ENCODE measurements at regions of chr14 and their contacts with region 1.

Region 1: GRCh38 chr14:29558516-29558915 is 369.1 kb downstream of the PRKD1 start:
- ATAC-seq: no peak
- H3K4me3 ChIP-seq: no peak overlapping the region
- H3K27ac ChIP-seq: no peak overlapping the region
- H3K4me1 ChIP-seq: no peaks in the 10 kb centered on the region

Region 2: GRCh38 chr14:29321646-29322045 is 236.9 kb before region 1 on chr14:
- in situ Hi-C with region 1: no loop called
- ATAC-seq: no peak
- H3K4me3 ChIP-seq: no peak overlapping the region
- H3K27ac ChIP-seq: no peak overlapping the region
- H3K4me1 ChIP-seq: no peaks in the 10 kb centered on the region

Region 3: DNA sequence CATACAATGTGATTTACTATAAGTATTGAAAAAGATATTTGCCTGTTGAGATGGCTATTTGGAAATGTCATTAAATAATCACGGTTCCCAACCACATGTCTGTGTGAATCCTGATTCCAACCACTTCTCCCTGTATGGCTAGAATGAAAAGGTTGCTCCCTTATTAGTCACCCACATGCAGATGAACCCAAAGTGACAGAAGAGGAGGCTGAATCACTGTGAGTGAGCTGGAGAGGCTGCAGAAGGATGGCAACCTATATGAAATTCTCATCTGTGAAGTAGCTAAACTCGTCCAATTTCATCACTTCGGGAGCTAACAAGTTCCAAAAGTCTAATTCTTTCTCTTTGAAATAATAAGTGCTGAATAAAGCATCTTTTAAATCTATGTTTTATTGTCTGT is 68.6 kb after region 1 on chr14:
- in situ Hi-C with region 1: no loop called
- ATAC-seq: peak in 7 of 8 experiments; percentile 53 to 97 (median 78)
- H3K4me3 ChIP-seq: no peak overlapping the region
- H3K27ac ChIP-seq: no peak overlapping the region
- H3K4me1 ChIP-seq: no peaks in the 10 kb centered on the region

Region 4: DNA sequence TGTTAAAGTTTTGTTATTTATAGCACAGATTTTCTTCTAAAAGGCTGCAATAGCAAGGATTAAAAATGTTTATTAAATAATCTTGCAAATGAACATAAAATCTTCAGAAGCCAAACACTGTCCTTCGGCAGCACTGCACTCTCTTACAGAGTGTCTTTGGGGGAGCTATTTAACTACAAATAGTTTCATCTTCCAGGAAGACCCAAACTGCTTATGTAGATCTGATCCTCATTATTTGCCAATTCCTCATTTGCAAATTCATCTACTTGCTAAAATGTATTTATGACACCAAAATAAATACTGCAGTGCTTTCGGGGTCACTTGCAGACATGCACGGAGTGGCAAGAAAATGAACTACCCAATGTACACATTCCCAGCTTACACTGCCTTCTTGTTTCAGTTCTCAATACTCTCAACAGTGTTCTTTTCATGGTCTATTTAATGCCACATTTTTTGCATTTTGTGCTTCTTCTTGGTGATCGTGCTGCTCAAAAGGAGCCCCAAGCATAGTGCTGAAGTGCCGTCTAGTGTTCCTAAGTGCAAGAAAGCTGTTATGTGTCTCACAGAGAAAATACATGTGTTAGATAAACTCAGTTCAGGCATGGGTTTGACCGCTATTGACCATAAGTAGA is 241.1 kb after region 1 on chr14:
- in situ Hi-C with region 1: loop called in 1 of 9 experiments (anchors 25 kb)
- ATAC-seq: peak in 4 of 8 experiments; percentile 19 to 75 (median 56)
- H3K4me3 ChIP-seq: no peak overlapping the region
- H3K27ac ChIP-seq: no peak overlapping the region
- H3K4me1 ChIP-seq: peaks cover 0 to 11% of the 10 kb centered on the region in 2 donors

Region 5: GRCh38 chr14:30005114-30005808 is 446.7 kb after region 1 on chr14:
- in situ Hi-C with region 1: loop called in 4 of 9 experiments (anchors 25 kb)
- ATAC-seq: peak in 7 of 8 experiments; percentile 53 to 90 (median 65)
- H3K4me3 ChIP-seq: no peak overlapping the region
- H3K27ac ChIP-seq: no peak overlapping the region
- H3K4me1 ChIP-seq: peaks cover 6 to 12% of the 10 kb centered on the region in 2 donors

Region 6: GRCh38 chr14:30214461-30215090 is 656.1 kb after region 1 on chr14:
- in situ Hi-C with region 1: loop called in 2 of 9 experiments (anchors 10 to 25 kb)
- ATAC-seq: peak in 7 of 8 experiments; percentile 40 to 73 (median 60)
- H3K4me3 ChIP-seq: no peak overlapping the region
- H3K27ac ChIP-seq: no peak overlapping the region
- H3K4me1 ChIP-seq: peaks cover 0 to 3% of the 10 kb centered on the region in 2 donors

Measured in motor neuron (in vitro differentiated cells).